CD4-positive, alpha-beta memory T cell (primary cell): ENCODE measurements at regions of chr12 and their contacts with region 1.

Region 1: GRCh38 chr12:15546102-15546701 is 223.9 kb downstream of the PTPRO start:
- DNase-seq: peak; percentile 65 to 74 (median 68)
- H3K4me3 ChIP-seq: no peak overlapping the region
- H3K4me3 Mint-ChIP-seq: peak overlapping the region; percentile 22 to 80 (median 59)
- H3K27ac ChIP-seq: peak overlapping the region; percentile 30
- H3K27ac Mint-ChIP-seq: peak overlapping the region; percentile 85 to 98 (median 88)
- H3K4me1 ChIP-seq: peaks cover 50% of the 10 kb centered on the region
- H3K4me1 Mint-ChIP-seq: peaks cover 35 to 62% (median 42%) of the 10 kb centered on the region in 4 donors
- H3K27me3 ChIP-seq: no peaks in the 10 kb centered on the region
- H3K27me3 Mint-ChIP-seq: no peaks in the 10 kb centered on the region

Region 2: GRCh38 chr12:15494329-15495046 is 51.7 kb before region 1 on chr12:
- CTCF ChIA-PET with region 1: no interaction called
- POLR2A ChIA-PET with region 1: no interaction called
- intact Hi-C with region 1: no loop called
- DNase-seq: no peak
- H3K4me3 ChIP-seq: no peak overlapping the region
- H3K4me3 Mint-ChIP-seq: no peak overlapping the region
- H3K27ac ChIP-seq: no peak overlapping the region
- H3K27ac Mint-ChIP-seq: no peak overlapping the region
- H3K4me1 ChIP-seq: no peaks in the 10 kb centered on the region
- H3K4me1 Mint-ChIP-seq: peaks cover 0 to 3% (median 2%) of the 10 kb centered on the region in 4 donors
- H3K27me3 ChIP-seq: no peaks in the 10 kb centered on the region
- H3K27me3 Mint-ChIP-seq: peaks cover 11 to 14% of the 10 kb centered on the region in 2 donors

Region 3: DNA sequence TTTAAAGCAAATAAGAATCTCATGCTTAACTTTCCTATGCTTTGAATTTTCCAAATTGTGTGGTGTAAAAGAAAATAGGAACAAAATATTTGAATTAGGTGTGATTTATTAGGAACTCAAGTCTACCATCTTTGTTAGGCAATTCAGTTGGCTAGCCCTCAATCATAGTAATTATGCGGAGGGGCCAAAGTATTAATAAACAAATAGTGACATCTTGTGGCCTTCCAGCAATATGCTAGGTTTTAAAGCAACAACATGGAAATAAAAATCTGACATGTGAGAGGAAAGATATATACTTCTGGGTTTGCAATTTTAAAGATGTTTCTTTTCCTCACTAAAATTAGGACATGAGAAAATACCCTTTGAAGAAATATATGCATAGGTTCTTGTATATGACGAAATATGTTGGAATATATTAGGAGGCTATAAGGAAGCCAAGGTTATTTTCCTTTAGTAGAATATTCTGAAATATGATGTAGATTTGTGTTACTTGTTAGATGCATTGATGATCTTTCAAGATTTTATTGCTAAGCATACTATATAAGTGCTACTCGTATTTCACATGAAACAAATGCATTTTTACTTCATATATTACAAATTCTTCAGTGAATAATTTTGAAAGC is 23.5 kb before region 1 on chr12:
- CTCF ChIA-PET with region 1: no interaction called
- POLR2A ChIA-PET with region 1: no interaction called
- intact Hi-C with region 1: no loop called
- DNase-seq: peak in 1 of 5 donors; percentile 24
- H3K4me3 ChIP-seq: no peak overlapping the region
- H3K4me3 Mint-ChIP-seq: no peak overlapping the region
- H3K27ac ChIP-seq: no peak overlapping the region
- H3K27ac Mint-ChIP-seq: no peak overlapping the region
- H3K4me1 ChIP-seq: no peaks in the 10 kb centered on the region
- H3K4me1 Mint-ChIP-seq: no peaks in the 10 kb centered on the region
- H3K27me3 ChIP-seq: no peaks in the 10 kb centered on the region
- H3K27me3 Mint-ChIP-seq: peaks cover 10 to 33% of the 10 kb centered on the region in 2 donors

Region 4: GRCh38 chr12:15575671-15576541 is 29.7 kb after region 1 on chr12:
- CTCF ChIA-PET with region 1: interaction called, 59 read pairs
- POLR2A ChIA-PET with region 1: interaction called, 37 read pairs
- intact Hi-C with region 1: loop called (anchors 1 kb)
- DNase-seq: no peak
- H3K4me3 ChIP-seq: no peak overlapping the region
- H3K4me3 Mint-ChIP-seq: peak overlapping the region in 2 of 8 donors; percentile 2 to 27
- H3K27ac ChIP-seq: no peak overlapping the region
- H3K27ac Mint-ChIP-seq: peak overlapping the region in 1 of 7 donors; percentile 30
- H3K4me1 ChIP-seq: peaks cover 9% of the 10 kb centered on the region
- H3K4me1 Mint-ChIP-seq: peaks cover 7 to 14% (median 12%) of the 10 kb centered on the region in 4 donors
- H3K27me3 ChIP-seq: no peaks in the 10 kb centered on the region
- H3K27me3 Mint-ChIP-seq: no peaks in the 10 kb centered on the region